ENCODE measurements at regions of chr12 and their contacts with region 1.

Region 1: DNA sequence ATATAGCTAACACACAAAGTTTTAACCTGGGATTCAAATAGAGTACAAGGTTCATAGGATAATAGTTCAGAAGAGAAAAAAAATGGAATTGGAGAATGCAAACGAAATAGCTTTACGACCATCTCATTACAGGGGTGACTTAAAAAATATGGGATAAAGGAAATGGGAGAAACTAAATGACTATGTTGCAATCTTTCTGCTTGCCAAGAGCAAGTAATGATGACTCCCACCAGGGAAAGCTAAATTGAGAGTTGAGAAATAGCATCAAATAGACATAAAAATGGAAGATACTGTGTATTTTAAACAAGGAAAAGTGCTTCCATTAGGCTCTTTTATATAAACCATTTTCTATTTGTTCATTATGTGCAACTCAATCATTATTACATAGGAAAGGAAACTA is 155.7 kb upstream of the ATXN7L3B start:
- DNase-seq: no peak
- H3K4me3 ChIP-seq: no peak overlapping the region
- H3K27ac ChIP-seq: no peak overlapping the region
- H3K4me1 ChIP-seq: no peaks in the 10 kb centered on the region
- H3K27me3 ChIP-seq: no peaks in the 10 kb centered on the region
- CTCF ChIP-seq: no peak

Region 2: DNA sequence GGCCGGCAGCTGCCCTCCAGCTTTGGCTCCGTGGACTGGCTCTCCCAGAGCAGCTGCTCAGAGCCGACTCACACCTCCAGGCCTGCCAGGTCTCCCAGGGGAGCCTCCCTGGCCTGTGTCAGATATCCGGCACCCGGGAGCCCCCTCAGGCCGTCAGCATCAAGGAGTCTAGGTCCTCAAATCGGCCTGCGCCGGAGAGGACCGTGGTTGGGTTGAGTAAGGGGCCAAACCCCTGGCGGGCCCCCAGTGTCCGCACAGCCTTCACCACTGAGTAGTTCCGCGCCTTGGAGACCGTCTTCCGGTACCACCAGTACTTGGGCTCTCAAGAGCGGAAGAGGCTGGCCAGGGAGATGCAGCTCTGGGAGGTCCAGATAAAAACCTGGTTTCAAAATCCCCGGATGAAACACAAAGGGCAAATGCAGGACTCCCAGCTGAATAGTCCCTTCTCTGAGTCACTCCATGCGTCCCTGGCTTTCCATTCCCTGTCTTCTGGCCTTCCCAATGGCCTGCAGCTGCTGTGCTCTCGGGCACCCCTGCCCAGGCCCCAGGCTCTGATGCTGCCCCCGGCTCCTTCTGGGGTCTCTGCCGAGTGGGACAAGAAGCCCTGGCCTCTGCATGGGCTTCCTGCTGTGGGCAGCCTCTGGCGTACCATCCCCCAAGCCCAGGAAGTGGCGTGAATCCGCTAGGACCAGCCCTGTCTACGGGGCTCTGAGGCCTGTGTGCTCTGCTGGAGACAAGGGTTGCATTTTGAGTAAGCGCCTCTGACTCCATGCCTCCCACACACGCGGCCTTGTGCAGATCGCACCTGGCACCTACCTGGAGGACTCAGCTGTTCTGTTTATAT is 89.4 kb before region 1 on chr12:
- CTCF ChIA-PET with region 1: no interaction called
- POLR2A ChIA-PET with region 1: no interaction called
- intact Hi-C with region 1: no loop called
- DNase-seq: no peak
- H3K4me3 ChIP-seq: no peak overlapping the region
- H3K27ac ChIP-seq: no peak overlapping the region
- H3K4me1 ChIP-seq: no peaks in the 10 kb centered on the region
- H3K27me3 ChIP-seq: no peaks in the 10 kb centered on the region
- CTCF ChIP-seq: no peak

Region 3: DNA sequence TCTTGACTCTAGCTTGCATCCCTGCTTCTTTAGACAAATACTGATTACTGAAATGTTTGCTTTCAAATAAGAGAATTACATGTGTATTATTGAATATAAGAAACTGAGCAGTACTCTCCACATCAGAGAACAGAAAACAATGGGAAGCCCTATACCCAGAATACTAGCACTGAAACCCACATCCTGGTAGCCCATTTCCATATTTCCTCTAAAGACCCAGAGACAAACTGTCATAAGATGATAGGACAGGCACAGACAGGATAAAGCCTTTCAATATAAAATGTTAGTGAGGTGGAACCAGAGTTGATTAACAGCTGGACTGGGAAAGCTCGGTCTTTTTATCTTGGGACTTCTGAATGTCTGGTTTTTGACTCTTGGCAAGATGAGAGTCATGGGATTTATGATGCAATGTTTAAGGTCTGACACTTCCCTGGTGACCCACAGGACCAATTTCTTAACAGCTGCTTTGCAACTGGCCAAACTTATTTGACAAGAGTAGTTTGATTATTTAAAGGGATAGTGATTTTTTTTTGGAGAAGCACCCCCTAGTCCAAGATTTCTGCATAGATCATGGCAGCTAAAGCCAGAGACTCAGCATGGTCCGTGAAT is 11.2 kb before region 1 on chr12:
- CTCF ChIA-PET with region 1: no interaction called
- POLR2A ChIA-PET with region 1: no interaction called
- intact Hi-C with region 1: loop called (anchors 1 kb)
- DNase-seq: no peak
- H3K4me3 ChIP-seq: no peak overlapping the region
- H3K27ac ChIP-seq: no peak overlapping the region
- H3K4me1 ChIP-seq: no peaks in the 10 kb centered on the region
- H3K27me3 ChIP-seq: no peaks in the 10 kb centered on the region
- CTCF ChIP-seq: no peak

Region 4: GRCh38 chr12:74456431-74456830 is 74.5 kb after region 1 on chr12:
- CTCF ChIA-PET with region 1: no interaction called
- POLR2A ChIA-PET with region 1: no interaction called
- intact Hi-C with region 1: no loop called
- DNase-seq: no peak
- H3K4me3 ChIP-seq: no peak overlapping the region
- H3K27ac ChIP-seq: no peak overlapping the region
- H3K4me1 ChIP-seq: no peaks in the 10 kb centered on the region
- H3K27me3 ChIP-seq: no peaks in the 10 kb centered on the region
- CTCF ChIP-seq: no peak

Region 5: DNA sequence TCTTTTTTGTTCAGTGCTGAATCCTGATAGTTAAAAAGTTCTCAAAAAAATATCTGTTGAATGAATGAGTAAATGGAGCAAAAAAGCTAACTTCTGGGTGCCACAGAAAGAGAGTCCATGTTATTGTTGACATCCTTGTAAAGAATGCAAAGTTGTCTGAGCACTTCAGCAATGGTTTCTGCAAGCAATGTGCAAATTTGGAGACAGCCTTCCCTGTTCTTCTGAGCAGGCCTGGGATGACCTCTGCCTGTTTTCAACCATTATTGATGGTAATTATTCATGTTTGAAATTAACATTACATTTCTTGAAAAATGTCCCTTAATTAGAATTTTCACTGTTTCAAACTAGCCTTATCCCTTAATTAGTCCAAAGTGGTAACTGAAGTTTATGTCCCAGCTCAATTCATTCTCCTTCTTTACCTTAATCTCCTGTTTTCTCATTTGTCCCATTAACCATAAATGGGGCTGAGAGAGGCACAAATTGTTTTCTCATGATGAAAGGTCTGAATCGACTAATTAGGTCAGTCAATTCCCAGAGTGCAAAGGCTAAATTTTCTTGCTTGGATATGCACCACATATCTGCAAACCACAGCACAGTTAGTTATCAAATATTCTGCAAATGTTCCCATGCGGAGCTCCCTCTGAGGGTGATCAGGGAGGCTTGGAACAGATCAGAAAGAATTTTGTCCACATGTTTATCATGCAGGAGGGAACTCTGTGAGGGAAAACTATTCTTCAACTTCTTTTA is 1268.8 kb after region 1 on chr12:
- CTCF ChIA-PET with region 1: no interaction called
- POLR2A ChIA-PET with region 1: no interaction called
- intact Hi-C with region 1: no loop called
- DNase-seq: no peak
- H3K4me3 ChIP-seq: no peak overlapping the region
- H3K27ac ChIP-seq: no peak overlapping the region
- H3K4me1 ChIP-seq: peaks cover 1% of the 10 kb centered on the region; the same call in 1 of the 2 replicates
- H3K27me3 ChIP-seq: no peaks in the 10 kb centered on the region
- CTCF ChIP-seq: no peak

Measured in PC-9 (cell line).